Adrenal gland (tissue), 19 donors: ENCODE measurements at regions of chr6 and their contacts with region 1.

Region 1: DNA sequence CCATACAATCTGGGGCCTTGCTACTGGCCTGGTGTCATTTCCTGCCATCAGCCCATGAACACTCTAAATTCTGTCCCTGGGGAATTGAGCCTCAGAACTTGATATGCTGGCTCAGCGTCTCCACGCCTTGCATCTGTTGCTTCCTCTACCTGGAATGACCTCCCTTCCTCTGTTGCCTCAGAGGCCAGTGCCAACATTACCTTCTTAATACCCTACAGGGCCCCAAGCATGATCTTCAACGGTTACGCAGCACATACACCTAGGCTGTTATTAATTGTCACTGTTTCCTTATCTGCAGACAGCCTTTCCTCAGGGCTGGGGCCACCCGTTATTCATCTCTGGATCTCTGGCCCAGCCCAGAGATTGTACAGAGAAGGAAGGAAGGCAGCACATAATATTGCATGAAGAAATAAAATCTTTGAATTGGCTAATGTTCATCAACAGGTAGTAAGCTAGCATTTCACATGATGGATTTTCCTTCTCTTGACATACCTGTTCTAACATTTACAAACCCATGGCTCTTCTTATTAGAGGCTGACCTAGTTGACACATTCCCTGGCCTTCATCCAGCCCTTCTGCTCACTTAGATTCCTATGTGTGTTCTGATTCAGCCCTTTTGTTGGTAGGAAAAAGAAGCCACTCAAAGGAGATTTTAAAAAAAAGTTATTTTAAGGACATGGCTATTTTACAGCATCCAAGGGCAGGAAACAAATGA is 8.4 kb upstream of the RNF182 start:
- DNase-seq: peak in 1 of 7 donors; percentile 2
- H3K4me3 ChIP-seq: no peak overlapping the region
- H3K27ac ChIP-seq: peak overlapping the region in 1 of 5 donors; percentile 13
- H3K4me1 ChIP-seq: no peaks in the 10 kb centered on the region
- H3K27me3 ChIP-seq: peaks cover 13% of the 10 kb centered on the region
- CTCF ChIP-seq: no peak
- POLR2A ChIP-seq: no peak

Region 2: DNA sequence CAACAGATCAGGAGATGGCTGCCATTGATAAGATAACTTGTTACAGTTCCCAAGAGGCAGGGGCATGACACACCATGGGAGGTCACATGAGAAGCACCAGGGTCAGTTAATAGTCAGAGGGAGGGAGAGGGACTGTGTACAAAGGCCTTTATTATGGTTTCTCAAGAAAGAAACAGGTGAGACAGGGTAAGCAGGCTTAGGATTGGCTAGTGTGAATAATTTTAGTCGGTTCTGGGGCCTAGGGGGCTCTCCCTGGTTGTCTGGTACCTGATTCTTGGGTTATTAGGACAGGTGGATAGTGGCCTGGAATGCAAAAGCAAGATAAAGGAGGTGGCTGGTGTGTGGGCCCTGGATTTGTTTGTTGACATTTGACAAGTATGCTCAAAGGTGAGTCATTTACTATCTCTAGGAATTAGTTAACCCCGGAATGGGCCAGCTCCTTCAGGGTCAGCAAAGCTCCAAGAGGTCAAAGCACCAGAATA is 52.7 kb before region 1 on chr6:
- intact Hi-C with region 1: no loop called
- DNase-seq: no peak
- H3K4me3 ChIP-seq: no peak overlapping the region
- H3K27ac ChIP-seq: no peak overlapping the region
- H3K4me1 ChIP-seq: peaks cover 8% of the 10 kb centered on the region in 2 donors
- H3K27me3 ChIP-seq: peaks cover 15% of the 10 kb centered on the region
- CTCF ChIP-seq: no peak
- POLR2A ChIP-seq: no peak

Region 3: GRCh38 chr6:14144678-14145113 is 228.3 kb after region 1 on chr6:
- intact Hi-C with region 1: loop called (anchors 5 to 10 kb)
- DNase-seq: peak; percentile 67 to 82 (median 74)
- H3K4me3 ChIP-seq: no peak overlapping the region
- H3K27ac ChIP-seq: no peak overlapping the region
- H3K4me1 ChIP-seq: no peaks in the 10 kb centered on the region
- H3K27me3 ChIP-seq: no peaks in the 10 kb centered on the region
- CTCF ChIP-seq: peak; percentile 84 to 98 (median 90)
- POLR2A ChIP-seq: no peak